ENCODE measurements at regions of chr10 and their contacts with region 1.

Region 1: DNA sequence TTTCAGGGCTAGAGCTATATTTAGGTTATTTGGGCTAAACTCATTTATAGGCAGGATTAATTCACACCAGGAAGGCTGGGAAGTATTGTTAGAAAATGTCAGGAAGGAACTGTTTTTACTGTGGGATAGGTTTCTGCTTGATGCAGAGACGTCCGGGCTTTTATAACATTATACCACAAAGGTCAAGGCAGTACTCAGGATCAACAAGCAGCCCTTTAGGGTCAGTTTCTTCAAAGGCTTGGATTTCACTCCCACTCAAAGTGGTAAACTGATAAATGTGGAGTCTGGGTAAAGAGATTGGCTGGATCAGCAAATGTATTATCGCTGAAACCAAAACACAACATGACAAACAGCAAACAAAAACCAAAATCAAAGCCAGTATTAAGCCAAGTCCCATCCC is 127.2 kb downstream of the ARL5B start:
- DNase-seq: no peak
- H3K4me3 ChIP-seq: no peak overlapping the region
- H3K27ac ChIP-seq: no peak overlapping the region
- H3K4me1 ChIP-seq: no peaks in the 10 kb centered on the region
- H3K27me3 ChIP-seq: no peaks in the 10 kb centered on the region
- CTCF ChIP-seq: no peak

Region 2: GRCh38 chr10:19097151-19097550 is 310.7 kb after region 1 on chr10:
- CTCF ChIA-PET with region 1: no interaction called
- POLR2A ChIA-PET with region 1: no interaction called
- intact Hi-C with region 1: no loop called
- DNase-seq: no peak
- H3K4me3 ChIP-seq: no peak overlapping the region
- H3K27ac ChIP-seq: no peak overlapping the region
- H3K4me1 ChIP-seq: no peaks in the 10 kb centered on the region
- H3K27me3 ChIP-seq: peaks cover 3% of the 10 kb centered on the region; the same call in 1 of the 2 replicates
- CTCF ChIP-seq: no peak

Region 3: DNA sequence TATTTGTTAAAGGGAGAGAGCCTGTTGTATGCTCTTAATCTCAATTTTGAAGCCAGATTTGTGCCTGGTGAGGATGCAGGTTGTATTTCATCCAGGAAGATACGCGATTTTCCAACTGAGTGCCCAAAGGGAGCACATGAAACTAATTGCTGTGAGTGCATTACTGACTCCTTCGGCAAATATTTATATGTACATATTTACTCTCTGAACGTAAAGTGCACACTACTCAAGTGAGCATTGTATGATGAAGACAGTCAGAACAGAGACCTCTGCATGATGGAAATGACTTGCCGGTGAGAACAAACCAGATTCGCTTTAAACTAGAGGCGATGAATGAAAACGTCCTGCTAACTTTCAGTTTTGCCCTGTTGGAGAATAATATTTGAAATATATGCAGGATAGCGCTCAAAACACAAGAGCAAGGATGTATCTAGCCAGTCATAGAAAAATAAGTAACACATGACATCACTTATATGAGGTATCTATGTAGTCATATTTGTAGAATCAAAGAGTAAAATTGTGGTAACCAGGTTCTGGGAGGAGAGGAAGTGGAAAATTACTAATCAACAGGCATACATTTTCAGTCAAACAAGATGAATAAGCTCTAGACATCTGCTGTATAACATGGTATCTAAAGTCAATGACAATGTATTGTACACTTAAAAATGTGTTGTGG is 392.3 kb after region 1 on chr10:
- CTCF ChIA-PET with region 1: no interaction called
- POLR2A ChIA-PET with region 1: interaction called, 12 read pairs
- intact Hi-C with region 1: no loop called
- DNase-seq: no peak
- H3K4me3 ChIP-seq: no peak overlapping the region
- H3K27ac ChIP-seq: no peak overlapping the region
- H3K4me1 ChIP-seq: no peaks in the 10 kb centered on the region
- H3K27me3 ChIP-seq: no peaks in the 10 kb centered on the region
- CTCF ChIP-seq: no peak